Lower leg skin (tissue), 4 donors: ENCODE measurements at regions of chr17 and their contacts with region 1.

Region 1: DNA sequence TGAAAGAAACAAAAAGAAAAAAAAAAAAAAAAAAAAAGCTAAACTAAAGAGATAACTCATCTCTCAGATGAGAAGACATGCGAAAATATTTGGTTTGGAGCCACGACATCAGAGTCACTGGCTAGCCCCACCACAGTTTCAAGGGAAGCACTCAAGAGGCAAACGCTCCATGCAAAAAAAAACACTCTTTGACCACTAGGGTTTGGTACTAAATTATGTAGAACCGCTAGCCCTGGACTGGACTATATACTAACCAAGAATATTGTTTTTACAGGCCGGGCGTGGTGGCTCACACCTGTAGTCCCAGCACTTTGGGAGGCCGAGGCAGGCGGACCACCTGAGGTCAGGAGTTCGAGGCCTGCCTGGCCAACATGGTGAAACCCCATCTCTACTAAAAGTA is 37.3 kb downstream of the METTL16 start:
- DNase-seq: no peak
- H3K4me3 ChIP-seq: no peak overlapping the region
- CTCF ChIP-seq: no peak
- POLR2A ChIP-seq: no peak

Region 2: GRCh38 chr17:2500446-2500845 is 26.1 kb after region 1 on chr17:
- intact Hi-C with region 1: loop called (anchors 1 kb)
- DNase-seq: no peak
- H3K4me3 ChIP-seq: no peak overlapping the region
- CTCF ChIP-seq: no peak
- POLR2A ChIP-seq: no peak